Panc1 (cell line): ENCODE measurements at regions of chr1 and their contacts with region 1.

Region 1: DNA sequence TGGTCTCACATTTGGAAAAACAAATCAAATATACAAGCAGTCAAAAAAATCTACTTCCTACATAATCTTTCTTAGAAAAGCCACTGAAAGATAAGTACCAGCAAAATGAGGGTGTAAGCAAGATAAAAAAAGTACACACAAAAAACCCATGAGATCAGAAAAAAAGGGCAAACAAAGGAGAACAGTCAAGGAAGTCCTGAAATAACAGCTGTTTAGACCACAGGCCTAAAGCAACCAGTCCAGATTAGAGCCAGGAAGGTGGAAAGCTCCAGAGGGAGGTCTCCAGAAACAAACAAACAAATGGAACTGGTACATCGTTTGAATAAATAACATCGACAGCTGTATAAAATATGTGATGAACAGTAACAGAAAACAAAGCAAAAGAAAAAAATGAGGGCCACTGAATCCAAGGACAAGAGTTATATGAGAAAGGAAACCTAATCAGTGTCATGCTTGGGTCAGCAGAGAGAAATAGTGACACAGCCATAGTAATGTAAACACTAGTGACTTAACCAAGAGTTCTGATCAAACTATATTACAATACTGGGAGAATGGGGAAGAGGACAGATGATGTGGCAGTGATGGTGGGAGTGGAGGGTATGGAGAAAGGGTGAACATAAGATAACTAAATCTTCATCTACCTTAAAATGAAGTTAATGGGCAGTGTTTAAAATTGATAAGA is 67.5 kb downstream of the NVL start:
- DNase-seq: no peak
- ATAC-seq: no peak
- H3K4me3 ChIP-seq: no peak overlapping the region
- H3K27ac ChIP-seq: no peak overlapping the region
- H3K4me1 ChIP-seq: 0 out of 2 replicates have a peak, but pooled peaks cover 5% of the 10 kb centered on the region
- H3K27me3 ChIP-seq: no peaks in the 10 kb centered on the region
- CTCF ChIP-seq: no peak

Region 2: DNA sequence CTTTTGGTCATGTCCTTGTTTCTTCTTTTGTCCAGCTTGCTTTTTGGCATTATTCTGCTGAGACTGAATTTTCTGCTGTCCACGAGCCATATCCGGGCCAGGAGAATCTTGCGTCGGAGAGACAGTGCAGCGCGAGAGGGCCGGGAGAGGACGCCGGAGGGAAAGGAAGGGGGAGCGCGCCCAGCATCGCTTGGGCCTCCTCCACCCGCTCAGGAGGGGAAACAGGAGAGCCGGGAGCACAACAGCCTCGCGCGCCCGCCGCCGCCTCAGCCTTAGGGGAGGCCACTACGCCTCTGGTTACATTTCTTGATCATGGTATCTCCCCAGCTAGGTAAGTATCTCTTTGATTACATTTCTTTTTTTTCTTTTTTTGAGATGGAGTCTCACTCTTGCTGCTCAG is 86.9 kb before region 1 on chr1:
- CTCF ChIA-PET with region 1: no interaction called
- POLR2A ChIA-PET with region 1: no interaction called
- in situ Hi-C with region 1: no loop called
- intact Hi-C with region 1: no loop called
- DNase-seq: no peak
- ATAC-seq: peak; percentile 66
- H3K4me3 ChIP-seq: no peak overlapping the region
- H3K27ac ChIP-seq: no peak overlapping the region
- H3K4me1 ChIP-seq: no peaks in the 10 kb centered on the region
- H3K27me3 ChIP-seq: no peaks in the 10 kb centered on the region
- CTCF ChIP-seq: no peak

Region 3: DNA sequence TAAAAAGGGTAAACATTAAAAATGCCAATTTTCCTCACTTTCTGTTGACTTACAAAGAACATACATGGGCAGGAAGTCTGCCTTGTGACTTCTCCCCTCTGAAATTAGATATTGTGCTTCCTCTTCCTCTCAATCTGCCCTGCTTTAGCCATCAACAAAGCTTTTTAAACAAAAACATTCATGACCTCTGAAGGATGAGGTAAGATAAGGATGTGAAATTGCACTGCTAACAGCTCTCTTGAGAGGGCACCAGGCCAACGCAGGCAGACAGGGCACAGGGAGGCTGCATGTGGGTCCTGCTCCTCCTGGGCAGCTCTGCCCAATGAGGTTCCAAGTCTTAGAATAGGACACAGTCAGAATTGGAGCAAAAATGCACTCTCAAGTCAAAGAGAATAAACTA is 17.3 kb before region 1 on chr1:
- CTCF ChIA-PET with region 1: no interaction called
- POLR2A ChIA-PET with region 1: interaction called, 13 read pairs
- in situ Hi-C with region 1: no loop called
- intact Hi-C with region 1: no loop called
- DNase-seq: no peak
- ATAC-seq: no peak
- H3K4me3 ChIP-seq: no peak overlapping the region
- H3K27ac ChIP-seq: no peak overlapping the region
- H3K4me1 ChIP-seq: no peaks in the 10 kb centered on the region
- H3K27me3 ChIP-seq: no peaks in the 10 kb centered on the region
- CTCF ChIP-seq: no peak

Region 4: GRCh38 chr1:224273641-224274040 is 11.1 kb after region 1 on chr1:
- CTCF ChIA-PET with region 1: no interaction called
- POLR2A ChIA-PET with region 1: no interaction called
- in situ Hi-C with region 1: no loop called
- intact Hi-C with region 1: no loop called
- DNase-seq: no peak
- ATAC-seq: no peak
- H3K4me3 ChIP-seq: no peak overlapping the region
- H3K27ac ChIP-seq: no peak overlapping the region
- H3K4me1 ChIP-seq: no peaks in the 10 kb centered on the region
- H3K27me3 ChIP-seq: no peaks in the 10 kb centered on the region
- CTCF ChIP-seq: no peak

Region 5: GRCh38 chr1:224304697-224305096 is 42.2 kb after region 1 on chr1:
- CTCF ChIA-PET with region 1: interaction called, 11 read pairs
- POLR2A ChIA-PET with region 1: no interaction called
- in situ Hi-C with region 1: no loop called
- intact Hi-C with region 1: no loop called
- DNase-seq: no peak
- ATAC-seq: no peak
- H3K4me3 ChIP-seq: no peak overlapping the region
- H3K27ac ChIP-seq: no peak overlapping the region
- H3K4me1 ChIP-seq: no peaks in the 10 kb centered on the region
- H3K27me3 ChIP-seq: no peaks in the 10 kb centered on the region
- CTCF ChIP-seq: no peak

Region 6: DNA sequence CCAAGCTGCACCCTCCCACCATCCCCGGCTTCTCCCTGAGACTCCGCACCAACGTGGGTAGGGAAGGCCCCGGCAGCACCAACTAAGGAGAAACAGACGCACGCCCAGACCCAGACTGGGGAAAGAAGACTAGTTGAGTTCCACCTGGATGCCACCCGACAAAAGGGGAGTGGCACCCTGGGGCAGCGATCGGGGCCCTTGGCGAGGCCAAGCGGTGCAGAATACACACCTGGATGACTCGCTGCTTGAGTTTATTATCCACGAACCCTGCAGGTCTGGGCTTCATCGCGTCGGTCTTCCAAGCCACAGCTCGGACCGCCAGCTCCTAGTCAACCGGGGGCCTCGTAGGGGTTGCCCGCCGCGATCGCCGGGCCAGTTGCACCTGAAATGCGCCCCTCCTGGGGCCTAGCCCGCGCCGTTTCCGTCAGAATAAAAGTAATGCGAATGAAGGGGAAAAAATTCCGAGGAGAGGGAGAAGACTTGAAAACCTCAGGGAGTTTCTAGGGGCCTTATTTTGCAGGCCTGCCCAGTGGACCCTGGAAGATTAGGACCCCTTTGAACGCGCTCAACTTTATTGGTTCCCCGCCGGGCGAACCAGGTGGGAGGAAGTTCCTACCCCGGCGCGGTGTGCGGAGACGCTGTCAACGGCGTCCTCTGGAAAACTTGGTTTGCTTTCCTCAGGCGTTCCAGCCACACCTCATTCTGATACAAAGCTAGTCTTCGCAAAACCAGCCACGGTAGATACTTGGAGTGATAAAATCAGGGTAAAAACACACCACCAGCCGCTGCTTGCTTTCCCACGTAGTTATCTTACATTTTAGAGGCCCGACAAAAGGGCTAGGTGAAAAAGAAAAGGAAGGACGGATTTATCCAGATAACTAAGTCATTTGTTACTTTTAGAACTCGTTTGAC is 67.6 kb after region 1 on chr1 and contains the start of gene NVL:
- CTCF ChIA-PET with region 1: no interaction called
- POLR2A ChIA-PET with region 1: no interaction called
- in situ Hi-C with region 1: no loop called
- intact Hi-C with region 1: no loop called
- DNase-seq: peak; percentile 74
- ATAC-seq: peak; percentile 97
- H3K4me3 ChIP-seq: peak within 1 kb of the TSS; percentile 98 to 100
- H3K27ac ChIP-seq: peak within 1 kb of the TSS; percentile 99
- H3K4me1 ChIP-seq: peaks cover 16% of the 10 kb centered on the region
- H3K27me3 ChIP-seq: no peaks in the 10 kb centered on the region
- CTCF ChIP-seq: no peak
- total RNA-seq, gene NVL: 25.0 TPM

Region 7: GRCh38 chr1:224623743-224624333 is 361.3 kb after region 1 on chr1:
- CTCF ChIA-PET with region 1: no interaction called
- POLR2A ChIA-PET with region 1: no interaction called
- in situ Hi-C with region 1: no loop called
- intact Hi-C with region 1: no loop called
- DNase-seq: peak; percentile 75
- ATAC-seq: no peak
- H3K4me3 ChIP-seq: no peak overlapping the region
- H3K27ac ChIP-seq: no peak overlapping the region
- H3K4me1 ChIP-seq: no peaks in the 10 kb centered on the region
- H3K27me3 ChIP-seq: peaks cover 3% of the 10 kb centered on the region
- CTCF ChIP-seq: no peak